ENCODE measurements at regions of chr9 and their contacts with region 1.

Region 1: GRCh38 chr9:96555567-96556386 is 63.9 kb downstream of the CDC14B start:
- DNase-seq: no peak
- H3K4me3 ChIP-seq: no peak overlapping the region
- H3K4me3 Mint-ChIP-seq: no peak overlapping the region
- H3K27ac Mint-ChIP-seq: no peak overlapping the region
- H3K4me1 ChIP-seq: peaks cover 51% of the 10 kb centered on the region
- H3K4me1 Mint-ChIP-seq: peaks cover 56% of the 10 kb centered on the region
- H3K27me3 ChIP-seq: no peaks in the 10 kb centered on the region
- H3K27me3 Mint-ChIP-seq: no peaks in the 10 kb centered on the region
- CTCF ChIP-seq: no peak

Region 2: GRCh38 chr9:96383165-96383942 is 172.4 kb before region 1 on chr9 and contains the start of gene SLC35D2:
- CTCF ChIA-PET with region 1: no interaction called
- POLR2A ChIA-PET with region 1: no interaction called
- intact Hi-C with region 1: no loop called
- DNase-seq: peak; percentile 84 to 88
- H3K4me3 ChIP-seq: peak within 1 kb of the TSS; percentile 71
- H3K4me3 Mint-ChIP-seq: peak within 1 kb of the TSS; percentile 87
- H3K27ac Mint-ChIP-seq: peak within 1 kb of the TSS; percentile 79
- H3K4me1 ChIP-seq: peaks cover 42% of the 10 kb centered on the region
- H3K4me1 Mint-ChIP-seq: peaks cover 36% of the 10 kb centered on the region
- H3K27me3 ChIP-seq: no peaks in the 10 kb centered on the region
- H3K27me3 Mint-ChIP-seq: no peaks in the 10 kb centered on the region
- CTCF ChIP-seq: no peak
- total RNA-seq, gene SLC35D2: 77.5 and 81.0 TPM in 2 replicates

Region 3: DNA sequence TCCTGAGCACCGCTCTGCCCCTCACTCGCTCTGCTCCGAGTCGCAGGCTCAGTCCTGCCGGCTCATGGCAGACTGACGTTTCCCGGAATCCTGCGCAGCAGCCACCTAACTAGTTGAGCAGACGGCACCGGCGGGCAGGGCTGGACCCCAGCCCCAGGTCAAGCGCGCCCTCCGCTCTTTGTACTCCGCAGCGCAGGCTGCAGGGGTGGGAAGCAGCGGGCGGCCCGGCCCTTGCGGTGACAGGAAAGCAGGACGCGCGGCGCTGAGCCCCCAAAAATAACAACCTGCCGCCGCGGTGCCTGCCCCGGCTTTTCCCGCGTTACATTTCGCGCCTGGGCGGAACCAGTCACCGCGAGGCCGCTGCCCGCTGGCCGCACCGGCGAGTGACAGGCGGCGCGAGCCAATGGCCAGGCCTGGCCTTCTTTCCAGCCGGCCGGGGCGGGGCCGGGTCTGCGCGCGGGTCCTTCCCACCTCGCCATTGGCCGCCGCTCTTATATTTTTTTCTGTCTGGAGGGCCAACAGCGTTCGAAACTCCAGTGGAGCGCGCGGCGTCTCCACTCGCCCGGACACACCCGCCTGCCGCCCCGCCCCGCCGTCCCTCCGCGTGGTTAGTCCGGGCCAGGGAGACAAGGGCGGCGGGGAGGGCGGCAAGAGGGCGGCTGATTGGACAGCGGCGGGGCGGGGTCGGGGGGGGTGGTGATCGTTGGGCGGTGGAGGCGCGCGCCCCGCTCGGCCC is 137.5 kb before region 1 on chr9 and contains the start of gene ZNF367:
- CTCF ChIA-PET with region 1: no interaction called
- POLR2A ChIA-PET with region 1: no interaction called
- intact Hi-C with region 1: no loop called
- DNase-seq: peak; percentile 98
- H3K4me3 ChIP-seq: peak within 1 kb of the TSS; percentile 67
- H3K4me3 Mint-ChIP-seq: peak within 1 kb of the TSS; percentile 94
- H3K27ac Mint-ChIP-seq: peak within 1 kb of the TSS; percentile 94
- H3K4me1 ChIP-seq: peaks cover 19% of the 10 kb centered on the region
- H3K4me1 Mint-ChIP-seq: peaks cover 17% of the 10 kb centered on the region
- H3K27me3 ChIP-seq: no peaks in the 10 kb centered on the region
- H3K27me3 Mint-ChIP-seq: no peaks in the 10 kb centered on the region
- CTCF ChIP-seq: no peak
- total RNA-seq, gene ZNF367: 9.3 and 10.0 TPM in 2 replicates

Region 4: DNA sequence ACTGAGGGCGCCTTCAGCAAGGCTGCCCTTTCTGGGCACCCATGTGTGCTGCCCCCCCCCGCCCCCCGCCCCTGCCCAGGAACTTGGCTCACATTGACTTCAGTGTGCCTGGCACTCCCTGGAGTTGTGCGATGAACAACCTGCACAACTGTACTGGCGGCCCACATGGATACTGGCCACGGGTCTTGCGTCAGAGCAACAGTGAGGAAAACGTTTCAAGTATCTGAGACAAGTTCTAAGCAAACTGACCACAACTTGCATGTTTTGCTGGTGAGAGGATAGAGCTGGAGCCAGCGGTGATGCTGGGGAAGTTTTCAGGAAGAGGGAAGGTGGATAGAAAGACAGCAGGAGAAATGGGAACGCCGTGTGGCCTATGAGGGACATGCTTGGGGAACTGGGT is 60.4 kb before region 1 on chr9:
- CTCF ChIA-PET with region 1: no interaction called
- POLR2A ChIA-PET with region 1: no interaction called
- intact Hi-C with region 1: loop called (anchors 5 kb)
- DNase-seq: no peak
- H3K4me3 ChIP-seq: no peak overlapping the region
- H3K4me3 Mint-ChIP-seq: no peak overlapping the region
- H3K27ac Mint-ChIP-seq: no peak overlapping the region
- H3K4me1 ChIP-seq: peaks cover 16% of the 10 kb centered on the region
- H3K4me1 Mint-ChIP-seq: peaks cover 11% of the 10 kb centered on the region
- H3K27me3 ChIP-seq: no peaks in the 10 kb centered on the region
- H3K27me3 Mint-ChIP-seq: no peaks in the 10 kb centered on the region
- CTCF ChIP-seq: no peak